ENCODE measurements at regions of chr16 and their contacts with region 1.

Region 1: DNA sequence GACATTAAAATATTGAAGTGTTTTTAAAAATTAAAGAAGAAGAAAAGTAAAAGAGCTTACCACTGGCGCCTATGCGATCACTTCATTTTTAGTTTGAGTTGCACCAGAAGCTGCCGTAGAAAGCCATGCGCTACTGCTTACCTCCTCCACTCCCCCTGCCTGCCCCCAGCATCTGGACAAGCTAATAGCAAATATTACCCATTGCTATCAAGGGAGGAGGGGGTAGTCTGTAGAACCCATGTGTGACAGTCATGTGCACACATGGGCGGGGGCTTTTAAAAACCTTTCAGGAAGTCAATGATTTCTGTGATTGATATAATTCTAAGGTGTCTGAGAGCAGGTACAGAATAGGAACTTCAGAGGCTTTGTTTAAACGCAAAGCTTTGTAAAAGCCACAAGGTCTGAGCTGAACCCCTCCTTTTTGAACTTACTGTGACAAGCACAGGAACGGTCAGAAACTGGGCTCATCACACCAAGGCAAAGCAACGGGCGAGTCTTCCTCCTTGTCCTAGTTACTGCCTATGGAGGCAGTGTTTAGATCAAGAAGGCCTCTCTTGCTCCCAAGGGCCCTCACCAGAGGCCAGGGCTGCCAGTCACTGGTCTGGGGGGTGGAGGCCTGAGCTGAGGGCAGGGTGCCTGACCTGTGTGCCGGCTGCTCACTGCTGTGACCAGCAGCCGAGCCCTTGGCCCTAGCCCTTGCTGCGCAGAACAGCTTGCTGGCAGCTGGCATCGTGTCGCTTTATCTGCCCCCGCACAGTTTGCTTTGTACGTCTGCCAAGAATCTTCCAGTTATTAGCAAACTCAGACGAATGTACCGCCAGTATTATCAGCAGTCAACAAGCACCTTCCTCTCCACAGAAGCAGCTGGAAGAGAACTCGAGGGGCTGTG is 15.0 kb downstream of the GINS2 start:
- DNase-seq: no peak
- ATAC-seq: no peak
- H3K4me3 Mint-ChIP-seq: no peak overlapping the region
- H3K27ac Mint-ChIP-seq: no peak overlapping the region
- H3K4me1 Mint-ChIP-seq: peaks cover 6% of the 10 kb centered on the region
- H3K27me3 Mint-ChIP-seq: no peaks in the 10 kb centered on the region
- CTCF ChIP-seq: no peak

Region 2: DNA sequence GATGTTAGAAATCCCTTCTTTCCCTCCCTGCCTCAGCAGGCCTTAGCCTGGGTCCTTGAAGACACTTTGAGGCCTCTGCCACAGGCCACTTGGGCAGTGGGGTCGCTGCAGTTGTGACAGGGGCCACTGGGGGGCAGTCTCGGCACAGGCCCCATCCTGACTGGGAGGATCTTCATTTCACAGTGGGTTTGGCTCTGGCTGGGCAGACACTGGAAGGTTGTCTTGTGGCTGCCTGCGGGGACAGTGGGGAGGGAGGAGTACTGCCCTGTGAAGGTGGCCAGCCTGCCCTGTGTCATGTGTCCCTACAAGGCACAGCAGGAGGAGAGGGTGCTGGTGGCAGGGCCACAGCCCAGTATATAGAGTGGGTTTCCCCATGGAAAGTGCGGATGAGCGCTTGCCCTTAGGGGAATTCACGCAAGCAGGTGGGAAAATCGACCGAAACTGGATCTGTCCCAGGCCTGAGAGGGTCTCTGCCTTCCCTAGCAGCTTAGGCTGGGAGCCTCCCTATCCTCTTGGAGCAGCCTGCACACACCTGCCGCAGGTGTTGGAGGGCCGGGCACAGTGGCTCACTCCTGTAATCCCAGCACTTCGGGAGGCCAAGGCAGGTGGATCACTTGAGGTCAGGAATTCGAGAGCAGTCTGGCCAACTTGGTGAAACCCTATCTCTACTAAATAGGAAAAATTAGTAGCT is 13.8 kb before region 1 on chr16:
- CTCF ChIA-PET with region 1: interaction called, 18 read pairs
- POLR2A ChIA-PET with region 1: interaction called, 3 read pairs
- intact Hi-C with region 1: no loop called
- DNase-seq: peak; percentile 83
- ATAC-seq: peak; percentile 97
- H3K4me3 Mint-ChIP-seq: no peak overlapping the region
- H3K27ac Mint-ChIP-seq: no peak overlapping the region
- H3K4me1 Mint-ChIP-seq: no peaks in the 10 kb centered on the region
- H3K27me3 Mint-ChIP-seq: no peaks in the 10 kb centered on the region
- CTCF ChIP-seq: peak; percentile 82

Measured in activated CD8-positive, alpha-beta T cell treated with anti-CD3 and anti-CD28 coated beads for 36 hours (primary cell).